GM18951 (cell line): ENCODE measurements at regions of chr1 and their contacts with region 1.

Region 1: DNA sequence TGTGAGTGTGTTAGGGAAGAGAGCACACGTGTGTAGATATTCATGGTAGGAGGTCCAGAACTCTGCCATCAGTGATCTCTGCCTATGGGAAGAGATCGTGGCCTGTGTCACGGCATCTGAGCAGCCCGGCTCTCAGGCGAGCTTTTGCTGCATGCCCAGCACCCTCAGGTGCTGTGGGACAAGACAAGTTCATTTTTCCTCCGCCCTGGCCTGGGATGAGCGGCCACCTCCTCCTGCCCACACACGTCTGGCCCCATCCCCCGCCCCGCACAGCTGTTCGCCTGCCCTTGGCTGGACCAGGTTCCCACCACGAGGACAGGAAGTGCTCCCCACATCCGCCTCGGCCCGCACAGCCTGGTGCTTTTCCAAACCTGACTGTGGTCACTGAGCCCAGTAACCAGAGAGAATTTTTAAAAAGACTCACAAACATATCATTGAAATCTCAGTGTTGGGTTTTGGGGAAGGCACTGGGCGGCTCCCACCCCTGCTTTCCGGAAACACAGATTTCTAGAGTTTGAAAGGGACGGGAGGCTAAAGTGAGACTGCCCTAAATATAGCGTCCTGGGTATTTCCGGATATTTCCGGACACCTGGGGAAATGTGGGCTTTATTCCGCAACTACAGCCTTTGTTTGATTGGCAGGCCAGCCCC is 18.0 kb downstream of the BMP8A start:
- POLR2A ChIP-seq: no peak

Region 2: DNA sequence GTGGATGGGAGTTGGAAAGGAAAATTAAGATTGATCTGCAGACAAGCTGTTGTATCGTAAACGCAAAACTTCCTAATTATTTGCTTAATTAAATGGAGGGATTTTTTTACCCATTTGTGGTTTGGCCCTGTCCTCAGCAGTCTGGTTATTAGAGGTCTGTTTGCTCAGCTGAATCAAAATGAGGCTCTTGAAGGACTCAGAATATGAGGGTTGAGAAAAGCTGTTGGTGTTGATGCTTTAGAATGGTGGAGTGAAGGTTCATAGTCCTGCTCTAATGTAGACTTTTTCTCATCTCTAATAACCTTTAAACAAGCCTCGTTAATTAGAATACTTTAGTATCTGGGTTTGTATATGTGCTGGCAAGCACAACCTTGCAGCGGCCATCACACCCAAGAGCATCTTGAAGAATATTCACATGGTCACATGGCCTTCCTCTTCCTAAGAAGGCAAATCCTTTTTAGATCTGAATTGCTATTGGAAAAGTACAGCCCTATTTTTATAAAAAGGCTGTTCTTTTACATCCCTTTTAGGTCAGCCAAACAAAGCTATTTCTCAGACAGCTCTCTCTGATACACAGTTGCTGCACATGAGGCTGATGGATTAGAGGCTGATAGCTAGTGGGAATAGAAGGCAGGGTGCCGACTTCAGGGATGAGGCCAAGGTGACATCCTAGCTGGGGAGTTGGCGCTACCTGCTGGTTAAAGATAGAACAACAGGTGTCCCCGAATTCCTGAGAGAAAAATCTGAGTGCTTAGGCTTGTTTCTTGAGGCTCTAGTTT is 251.2 kb before region 1 on chr1:
- in situ Hi-C with region 1: no loop called
- POLR2A ChIP-seq: no peak

Region 3: GRCh38 chr1:39776400-39776713 is 266.9 kb after region 1 on chr1:
- in situ Hi-C with region 1: loop called (anchors 5 kb)
- POLR2A ChIP-seq: no peak